Activated CD4-positive, alpha-beta T cell treated with anti-CD3 and anti-CD28 coated beads for 36 hours (primary cell): ENCODE measurements at regions of chr12 and their contacts with region 1.

Region 1: GRCh38 chr12:13362260-13362841 is 165.8 kb downstream of the EMP1 start:
- DNase-seq: peak; percentile 68
- ATAC-seq: peak; percentile 78
- H3K4me3 Mint-ChIP-seq: no peak overlapping the region
- H3K27ac Mint-ChIP-seq: no peak overlapping the region
- H3K4me1 Mint-ChIP-seq: no peaks in the 10 kb centered on the region
- H3K27me3 Mint-ChIP-seq: peaks cover 24% of the 10 kb centered on the region

Region 2: GRCh38 chr12:12786716-12787601 is 575.4 kb before region 1 on chr12:
- CTCF ChIA-PET with region 1: no interaction called
- POLR2A ChIA-PET with region 1: no interaction called
- intact Hi-C with region 1: no loop called
- DNase-seq: peak; percentile 84
- ATAC-seq: peak; percentile 89
- H3K4me3 Mint-ChIP-seq: peak overlapping the region; percentile 81
- H3K27ac Mint-ChIP-seq: peak overlapping the region; percentile 90
- H3K4me1 Mint-ChIP-seq: peaks cover 28% of the 10 kb centered on the region
- H3K27me3 Mint-ChIP-seq: no peaks in the 10 kb centered on the region

Region 3: GRCh38 chr12:13241833-13242488 is 120.4 kb before region 1 on chr12:
- CTCF ChIA-PET with region 1: no interaction called
- POLR2A ChIA-PET with region 1: no interaction called
- intact Hi-C with region 1: no loop called
- DNase-seq: no peak
- ATAC-seq: peak; percentile 42
- H3K4me3 Mint-ChIP-seq: no peak overlapping the region
- H3K27ac Mint-ChIP-seq: no peak overlapping the region
- H3K4me1 Mint-ChIP-seq: no peaks in the 10 kb centered on the region
- H3K27me3 Mint-ChIP-seq: peaks cover 9% of the 10 kb centered on the region

Region 4: GRCh38 chr12:13288937-13289652 is 73.3 kb before region 1 on chr12:
- CTCF ChIA-PET with region 1: no interaction called
- POLR2A ChIA-PET with region 1: no interaction called
- intact Hi-C with region 1: no loop called
- DNase-seq: no peak
- ATAC-seq: no peak
- H3K4me3 Mint-ChIP-seq: no peak overlapping the region
- H3K27ac Mint-ChIP-seq: no peak overlapping the region
- H3K4me1 Mint-ChIP-seq: no peaks in the 10 kb centered on the region
- H3K27me3 Mint-ChIP-seq: peaks cover 2% of the 10 kb centered on the region

Region 5: GRCh38 chr12:13372386-13372785 is 10.0 kb after region 1 on chr12:
- CTCF ChIA-PET with region 1: interaction called, 14 read pairs
- POLR2A ChIA-PET with region 1: no interaction called
- intact Hi-C with region 1: no loop called
- DNase-seq: no peak
- ATAC-seq: no peak
- H3K4me3 Mint-ChIP-seq: no peak overlapping the region
- H3K27ac Mint-ChIP-seq: no peak overlapping the region
- H3K4me1 Mint-ChIP-seq: no peaks in the 10 kb centered on the region
- H3K27me3 Mint-ChIP-seq: peaks cover 8% of the 10 kb centered on the region

Region 6: DNA sequence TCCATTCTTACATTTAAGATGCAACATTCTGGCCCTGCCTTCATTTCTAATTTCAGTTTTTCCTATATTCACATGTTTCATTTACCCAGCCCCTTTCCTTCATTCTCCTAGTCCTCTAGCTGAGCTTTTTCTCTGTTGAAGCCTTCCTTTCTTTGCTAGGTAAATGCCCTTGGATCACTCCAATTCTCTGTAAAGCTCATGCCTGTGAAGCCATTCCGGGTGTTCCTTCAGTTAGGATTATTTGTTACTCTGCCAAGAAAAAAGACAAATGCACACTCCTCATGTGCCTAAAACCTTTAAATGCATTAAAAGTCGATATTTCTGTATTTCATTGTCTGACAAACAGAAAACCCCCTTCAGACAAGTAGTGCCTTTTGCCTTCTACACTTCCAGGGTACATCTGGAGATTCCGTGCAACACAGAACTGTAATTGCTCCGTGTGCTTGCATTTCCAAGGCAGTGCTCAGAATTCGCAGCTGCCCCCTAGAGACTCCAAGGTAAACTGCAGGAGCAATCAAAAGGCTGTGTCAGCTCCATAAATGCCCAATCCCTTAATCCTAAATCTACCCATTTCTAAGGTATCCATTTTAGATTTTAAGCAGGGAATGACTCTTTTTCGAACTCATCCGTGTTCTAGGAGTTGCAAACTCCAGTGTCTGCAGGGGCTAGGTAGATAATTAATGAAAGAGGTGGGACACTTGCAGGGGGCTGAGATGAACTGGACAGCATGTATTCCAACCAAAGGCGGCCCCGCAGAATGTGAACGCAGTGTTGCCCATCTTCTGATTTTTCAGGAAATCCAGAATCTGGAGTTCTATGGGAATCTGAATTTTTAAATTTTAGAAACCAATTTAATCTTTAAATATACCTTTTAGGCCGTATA is 298.9 kb after region 1 on chr12:
- CTCF ChIA-PET with region 1: interaction called, 4 read pairs
- POLR2A ChIA-PET with region 1: no interaction called
- intact Hi-C with region 1: loop called in 1 of 2 experiments (anchors 5 kb)
- DNase-seq: peak; percentile 46
- ATAC-seq: peak; percentile 68
- H3K4me3 Mint-ChIP-seq: no peak overlapping the region
- H3K27ac Mint-ChIP-seq: no peak overlapping the region
- H3K4me1 Mint-ChIP-seq: peaks cover 3% of the 10 kb centered on the region
- H3K27me3 Mint-ChIP-seq: peaks cover 11% of the 10 kb centered on the region